Heart left ventricle (tissue), 16 donors: ENCODE measurements at regions of chr16 and their contacts with region 1.

Region 1: DNA sequence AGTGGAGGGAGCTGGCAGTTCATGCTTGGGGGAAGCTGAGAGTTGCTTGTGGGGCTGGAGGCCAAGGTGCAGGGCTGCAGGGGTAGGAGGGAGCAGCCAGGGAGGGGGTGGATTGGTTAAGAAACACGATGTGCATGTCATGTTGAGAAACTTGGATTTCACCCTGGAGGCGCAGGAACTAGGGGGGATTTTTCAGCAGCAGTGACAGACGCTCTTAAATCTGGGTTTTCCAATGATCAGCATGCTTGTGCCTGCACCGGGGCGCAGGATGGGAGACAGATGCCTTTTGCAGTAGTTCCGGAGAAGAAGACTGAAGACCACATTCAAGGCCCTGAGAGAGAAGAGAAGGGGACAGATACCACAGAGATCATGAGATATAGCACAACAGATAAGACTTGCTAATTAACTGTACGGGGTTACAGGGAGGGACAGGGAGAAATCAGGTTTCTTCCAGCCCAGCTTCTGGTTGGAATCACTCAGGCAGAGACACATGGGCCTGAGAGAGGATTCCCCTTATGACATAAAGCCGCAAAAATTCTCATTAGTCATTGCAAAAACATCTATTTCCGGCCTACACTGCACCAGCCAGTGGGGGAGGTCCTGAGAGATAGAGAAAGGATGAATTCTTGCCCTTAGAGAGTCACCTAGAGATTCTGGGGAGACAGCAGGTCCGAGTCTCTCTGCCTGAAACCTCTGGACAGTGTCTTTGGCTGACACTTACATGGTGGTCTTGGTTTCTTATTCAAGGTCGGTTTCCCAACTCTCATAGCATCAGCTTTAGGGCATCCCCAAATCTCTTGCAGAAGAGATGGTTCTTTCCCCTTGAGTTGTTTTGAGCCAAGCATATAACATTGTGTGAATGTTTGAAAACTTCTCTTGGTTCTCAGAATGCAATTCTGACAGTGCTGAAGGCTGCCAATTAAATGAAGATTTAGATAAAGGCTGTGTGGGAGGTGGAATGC is 27.1 kb downstream of the CDH13 start:
- DNase-seq: no peak
- ATAC-seq: peak in 3 of 4 donors; percentile 64 to 84 (median 82)
- H3K4me3 ChIP-seq: no peak overlapping the region
- H3K27ac ChIP-seq: peak overlapping the region in 9 of 12 donors; percentile 5 to 81 (median 41)
- H3K4me1 ChIP-seq: peaks cover 6 to 66% (median 43%) of the 10 kb centered on the region in 12 donors
- H3K27me3 ChIP-seq: no peaks in the 10 kb centered on the region
- CTCF ChIP-seq: no peak
- POLR2A ChIP-seq: no peak

Region 2: DNA sequence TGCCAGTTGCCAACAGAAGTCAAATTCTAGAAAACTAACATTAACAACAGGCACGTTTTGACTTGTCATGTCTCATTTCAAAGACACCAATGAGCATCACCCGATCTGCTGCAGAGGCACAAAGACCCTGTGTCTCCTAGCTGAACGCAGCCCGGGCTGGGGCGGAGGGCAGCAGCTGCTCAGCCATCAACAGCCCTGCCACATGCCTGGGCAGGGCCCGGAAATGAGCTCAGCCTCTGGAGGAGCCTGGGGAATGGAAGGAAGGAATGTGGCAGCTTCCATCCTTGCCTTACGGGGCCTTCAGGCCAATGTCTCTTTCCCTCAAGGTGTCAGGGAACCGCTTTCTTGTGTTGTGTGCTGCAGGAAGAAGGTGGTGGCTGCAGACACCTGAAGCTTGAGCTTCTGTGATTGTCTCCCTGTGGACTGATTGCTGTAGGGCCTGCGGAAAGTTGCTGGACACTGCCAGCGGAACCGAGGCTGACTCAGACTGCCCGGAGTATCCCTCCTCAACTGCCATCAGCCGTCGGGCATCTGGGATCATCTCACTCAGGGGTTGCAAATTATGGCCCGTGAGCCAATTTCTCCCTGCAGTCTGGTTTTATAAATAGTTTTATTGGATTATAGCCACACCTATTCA is 19.7 kb before region 1 on chr16:
- intact Hi-C with region 1: loop called in 1 of 10 experiments (anchors 2 kb)
- DNase-seq: peak; percentile 25 to 61 (median 47)
- ATAC-seq: peak in 3 of 4 donors; percentile 41 to 72 (median 65)
- H3K4me3 ChIP-seq: no peak overlapping the region
- H3K27ac ChIP-seq: peak overlapping the region in 11 of 12 donors; percentile 8 to 84 (median 56)
- H3K4me1 ChIP-seq: peaks cover 15 to 83% (median 56%) of the 10 kb centered on the region in 12 donors
- H3K27me3 ChIP-seq: peaks cover 0 to 4% (median 0%) of the 10 kb centered on the region in 9 donors
- CTCF ChIP-seq: no peak
- POLR2A ChIP-seq: no peak

Region 3: GRCh38 chr16:82699711-82700495 is 46.1 kb after region 1 on chr16:
- intact Hi-C with region 1: loop called in 2 of 10 experiments (anchors 5 kb)
- DNase-seq: peak in 4 of 5 donors; percentile 37 to 50 (median 44)
- ATAC-seq: peak; percentile 76 to 81 (median 80)
- H3K4me3 ChIP-seq: peak overlapping the region in 1 of 12 donors; percentile 11
- H3K27ac ChIP-seq: peak overlapping the region; percentile 64 to 90 (median 82)
- H3K4me1 ChIP-seq: peaks cover 7 to 65% (median 52%) of the 10 kb centered on the region in 12 donors
- H3K27me3 ChIP-seq: no peaks in the 10 kb centered on the region
- CTCF ChIP-seq: no peak
- POLR2A ChIP-seq: no peak